Activated CD8-positive, alpha-beta T cell treated with anti-CD3 and anti-CD28 coated beads for 36 hours (primary cell): ENCODE measurements at regions of chr4 and their contacts with region 1.

Region 1: DNA sequence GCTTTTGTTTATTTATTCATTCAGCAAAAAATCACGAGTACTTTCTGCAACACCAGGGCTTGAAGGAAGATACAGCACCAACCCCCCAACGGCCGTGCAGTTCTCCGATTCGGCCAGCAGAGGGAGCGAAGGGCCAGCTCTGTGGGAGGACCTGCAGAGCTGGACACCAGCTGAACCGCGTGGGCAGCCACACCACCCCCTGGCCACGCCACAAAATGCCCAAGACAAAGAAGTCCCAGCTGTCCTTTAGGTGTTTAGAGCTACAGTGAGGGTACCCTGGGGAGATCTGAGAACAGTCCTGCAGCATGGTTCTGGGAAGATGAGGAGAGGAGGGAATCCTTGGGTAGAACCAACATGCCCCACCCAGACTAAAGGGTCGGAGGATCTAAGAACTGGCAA is 83.1 kb downstream of the RELL1 start:
- DNase-seq: peak; percentile 83
- ATAC-seq: peak; percentile 85
- H3K4me3 Mint-ChIP-seq: no peak overlapping the region
- H3K27ac Mint-ChIP-seq: no peak overlapping the region
- H3K4me1 Mint-ChIP-seq: peaks cover 10% of the 10 kb centered on the region
- H3K27me3 Mint-ChIP-seq: no peaks in the 10 kb centered on the region
- CTCF ChIP-seq: peak; percentile 94

Region 2: DNA sequence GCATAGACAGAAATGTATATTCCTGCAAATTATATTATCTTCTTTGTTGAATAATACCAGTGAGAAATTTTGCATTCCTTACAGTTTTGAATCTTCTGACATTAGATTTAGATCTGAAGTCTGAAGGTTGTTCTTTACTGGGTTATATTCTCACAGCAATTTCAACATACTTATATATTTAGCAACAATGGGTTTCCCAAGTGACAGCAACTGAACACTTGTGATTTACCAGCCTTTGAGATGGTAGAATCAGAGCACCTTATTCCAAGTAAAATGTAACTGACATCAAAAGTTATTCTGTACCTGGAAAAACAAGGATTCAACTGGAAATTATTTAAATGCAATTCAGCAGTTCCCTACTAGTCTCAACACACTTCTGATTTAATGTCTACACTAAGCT is 17.1 kb after region 1 on chr4:
- CTCF ChIA-PET with region 1: interaction called, 17 read pairs
- POLR2A ChIA-PET with region 1: interaction called, 4 read pairs
- intact Hi-C with region 1: no loop called
- DNase-seq: no peak
- ATAC-seq: no peak
- H3K4me3 Mint-ChIP-seq: no peak overlapping the region
- H3K27ac Mint-ChIP-seq: no peak overlapping the region
- H3K4me1 Mint-ChIP-seq: peaks cover 15% of the 10 kb centered on the region
- H3K27me3 Mint-ChIP-seq: no peaks in the 10 kb centered on the region
- CTCF ChIP-seq: no peak

Region 3: DNA sequence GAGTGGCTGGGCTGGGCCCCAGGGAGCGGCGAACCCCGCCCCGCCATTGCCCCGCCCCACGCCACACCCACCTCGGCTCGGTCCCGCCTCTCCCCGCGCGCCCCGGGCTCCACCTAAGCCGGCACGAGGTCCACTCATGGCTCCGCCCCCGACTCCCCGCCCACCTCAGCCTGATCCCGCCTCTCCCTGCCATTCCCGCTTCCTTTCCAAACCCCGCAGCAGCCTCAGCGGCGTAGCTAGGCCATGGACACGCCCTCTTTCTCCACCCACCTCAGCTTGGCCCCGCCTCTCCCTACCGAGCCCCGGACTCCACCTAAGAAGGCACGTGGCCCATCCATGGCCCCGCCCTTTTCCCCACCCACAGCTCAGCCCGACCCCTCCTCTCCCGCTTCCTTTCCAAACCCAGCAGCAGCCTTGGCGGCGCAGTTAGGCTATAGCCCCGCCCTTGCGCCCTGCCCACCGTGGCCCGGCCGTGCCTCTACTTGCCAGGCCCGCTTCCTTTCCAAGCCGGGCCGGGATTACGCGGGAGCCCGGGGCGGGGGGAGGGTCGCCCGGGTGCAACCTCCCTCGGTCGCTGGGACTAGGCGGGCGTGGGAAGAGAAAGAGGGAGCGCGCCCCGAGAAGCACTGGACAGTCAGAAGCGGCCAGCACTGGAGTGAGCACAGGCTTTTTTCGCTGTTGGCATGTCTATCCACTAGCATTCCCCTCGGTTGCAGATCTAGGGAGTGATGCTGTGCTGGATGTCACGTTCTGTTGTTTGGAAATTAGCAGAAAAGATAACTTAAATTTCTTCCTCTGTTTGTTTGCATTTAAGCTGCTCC is 83.5 kb after region 1 on chr4 and contains the start of gene RELL1:
- CTCF ChIA-PET with region 1: interaction called, 10 read pairs
- POLR2A ChIA-PET with region 1: no interaction called
- intact Hi-C with region 1: loop called (anchors 5 kb)
- DNase-seq: peak; percentile 99
- ATAC-seq: peak; percentile 92
- H3K4me3 Mint-ChIP-seq: peak within 1 kb of the TSS; percentile 80
- H3K27ac Mint-ChIP-seq: peak within 1 kb of the TSS; percentile 90
- H3K4me1 Mint-ChIP-seq: peaks cover 34% of the 10 kb centered on the region
- H3K27me3 Mint-ChIP-seq: no peaks in the 10 kb centered on the region
- CTCF ChIP-seq: no peak
- total RNA-seq, gene RELL1: 13.8 to 15.3 TPM

Region 4: GRCh38 chr4:37780444-37781150 is 177.5 kb after region 1 on chr4:
- CTCF ChIA-PET with region 1: interaction called, 9 read pairs
- POLR2A ChIA-PET with region 1: no interaction called
- intact Hi-C with region 1: loop called (anchors 5 kb)
- DNase-seq: peak; percentile 58
- ATAC-seq: peak; percentile 64
- H3K4me3 Mint-ChIP-seq: no peak overlapping the region
- H3K27ac Mint-ChIP-seq: peak overlapping the region; percentile 73
- H3K4me1 Mint-ChIP-seq: peaks cover 16% of the 10 kb centered on the region
- H3K27me3 Mint-ChIP-seq: no peaks in the 10 kb centered on the region
- CTCF ChIP-seq: no peak

Region 5: GRCh38 chr4:37793562-37793961 is 190.5 kb after region 1 on chr4:
- CTCF ChIA-PET with region 1: interaction called, 13 read pairs
- POLR2A ChIA-PET with region 1: no interaction called
- intact Hi-C with region 1: no loop called
- DNase-seq: peak; percentile 25
- ATAC-seq: peak; percentile 62
- H3K4me3 Mint-ChIP-seq: no peak overlapping the region
- H3K27ac Mint-ChIP-seq: no peak overlapping the region
- H3K4me1 Mint-ChIP-seq: no peaks in the 10 kb centered on the region
- H3K27me3 Mint-ChIP-seq: no peaks in the 10 kb centered on the region
- CTCF ChIP-seq: no peak